ENCODE measurements at regions of chr15 and their contacts with region 1.

Region 1: DNA sequence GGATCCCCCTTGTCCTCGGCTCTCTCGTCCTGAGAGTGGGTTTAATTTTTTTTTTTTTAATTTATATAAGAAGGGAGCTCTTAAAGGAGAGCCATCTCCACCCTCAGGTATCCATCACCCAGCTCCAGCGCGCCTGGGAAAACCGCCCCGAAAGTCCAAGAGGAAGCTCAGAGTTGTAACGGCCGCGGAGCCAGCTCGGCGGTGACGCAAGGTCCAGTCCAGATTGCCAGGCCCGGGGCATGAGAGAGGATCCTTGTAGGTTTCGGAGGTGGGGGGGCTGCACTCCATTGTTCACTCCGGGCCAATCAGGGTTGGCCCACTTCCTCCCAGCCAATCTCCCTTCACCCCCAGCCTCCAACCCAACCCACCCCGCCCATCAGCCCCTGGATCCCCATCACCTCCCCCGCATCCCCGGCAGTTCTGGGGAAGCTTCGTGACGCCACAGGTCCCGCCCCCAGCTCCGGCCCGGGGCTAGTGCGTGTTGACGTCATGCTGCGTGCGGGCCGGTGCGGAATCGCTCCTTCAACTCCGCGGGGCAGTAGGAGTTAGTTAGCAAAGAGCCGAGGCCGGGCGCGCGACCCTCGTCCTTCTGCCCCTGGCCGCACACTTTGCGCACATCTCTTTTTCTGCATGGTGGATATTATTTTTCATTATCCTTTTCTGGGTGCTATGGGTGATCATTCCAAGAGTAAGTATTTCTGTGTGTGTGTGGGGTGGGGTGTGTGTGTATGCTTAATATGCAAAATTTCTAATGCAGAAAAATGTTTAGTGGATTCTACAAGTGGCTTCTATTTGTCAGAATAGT is at the start of gene ISL2:
- DNase-seq: peak; percentile 74
- ATAC-seq: peak; percentile 40
- H3K4me3 ChIP-seq: peak within 1 kb of the TSS; percentile 12 to 60 (median 40)
- H3K4me3 Mint-ChIP-seq: peak within 1 kb of the TSS; percentile 87
- H3K27ac ChIP-seq: no peak within 1 kb of the TSS
- H3K27ac Mint-ChIP-seq: peak within 1 kb of the TSS; percentile 69
- H3K4me1 ChIP-seq: peaks cover 65 to 66% of the 10 kb centered on the region in 2 donors
- H3K4me1 Mint-ChIP-seq: peaks cover 56% of the 10 kb centered on the region
- H3K27me3 ChIP-seq: peaks cover 0 to 88% (median 61%) of the 10 kb centered on the region in 4 experiments
- H3K27me3 Mint-ChIP-seq: peaks cover 58% of the 10 kb centered on the region
- CTCF ChIP-seq: no peak
- total RNA-seq, gene ISL2: 0.22 and 0.59 TPM in 2 replicates

Region 2: DNA sequence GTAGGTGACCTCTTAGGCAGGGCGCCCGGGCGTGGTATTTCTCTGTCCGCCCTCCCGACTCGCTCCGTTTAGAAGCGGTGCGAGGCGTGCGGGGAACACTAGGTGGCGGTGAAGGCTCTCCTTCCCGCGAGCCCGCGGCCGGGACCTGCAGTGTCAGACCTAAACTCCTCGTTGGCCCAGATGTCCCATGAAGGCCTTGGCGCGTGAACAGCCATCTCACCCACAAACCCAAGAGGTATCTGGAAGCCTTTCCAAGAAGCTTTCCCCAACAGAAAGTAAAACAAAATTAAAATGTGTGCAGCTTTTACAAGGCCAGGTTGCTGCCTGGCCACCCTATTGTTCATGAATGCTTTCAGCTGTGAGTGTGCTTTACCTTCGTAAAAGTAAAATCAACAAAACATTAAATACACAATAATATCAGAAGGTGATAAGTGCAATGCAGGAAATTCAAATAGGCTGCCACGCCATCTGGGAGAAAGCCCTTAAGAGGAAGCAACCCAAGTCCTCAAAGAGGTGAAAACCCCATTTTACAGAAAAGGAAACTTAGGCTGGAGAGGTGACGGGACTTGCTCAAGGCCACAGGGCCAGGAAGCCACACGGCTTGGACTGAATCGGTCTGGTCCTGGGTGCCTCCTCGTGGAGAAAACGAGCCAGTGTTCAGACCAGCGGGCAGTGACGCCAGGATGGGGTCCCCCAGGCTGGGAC is 145.5 kb before region 1 on chr15:
- CTCF ChIA-PET with region 1: interaction called, 10 read pairs
- POLR2A ChIA-PET with region 1: no interaction called
- intact Hi-C with region 1: no loop called
- DNase-seq: peak; percentile 72
- ATAC-seq: peak; percentile 94
- H3K4me3 ChIP-seq: peak overlapping the region in 3 of 5 experiments; percentile 13 to 47 (median 30)
- H3K4me3 Mint-ChIP-seq: peak overlapping the region; percentile 74
- H3K27ac ChIP-seq: no peak overlapping the region
- H3K27ac Mint-ChIP-seq: no peak overlapping the region
- H3K4me1 ChIP-seq: peaks cover 14 to 16% of the 10 kb centered on the region in 2 donors
- H3K4me1 Mint-ChIP-seq: peaks cover 16% of the 10 kb centered on the region
- H3K27me3 ChIP-seq: peaks cover 0 to 42% (median 7%) of the 10 kb centered on the region in 4 experiments
- H3K27me3 Mint-ChIP-seq: peaks cover 35% of the 10 kb centered on the region
- CTCF ChIP-seq: peak; percentile 89

Region 3: DNA sequence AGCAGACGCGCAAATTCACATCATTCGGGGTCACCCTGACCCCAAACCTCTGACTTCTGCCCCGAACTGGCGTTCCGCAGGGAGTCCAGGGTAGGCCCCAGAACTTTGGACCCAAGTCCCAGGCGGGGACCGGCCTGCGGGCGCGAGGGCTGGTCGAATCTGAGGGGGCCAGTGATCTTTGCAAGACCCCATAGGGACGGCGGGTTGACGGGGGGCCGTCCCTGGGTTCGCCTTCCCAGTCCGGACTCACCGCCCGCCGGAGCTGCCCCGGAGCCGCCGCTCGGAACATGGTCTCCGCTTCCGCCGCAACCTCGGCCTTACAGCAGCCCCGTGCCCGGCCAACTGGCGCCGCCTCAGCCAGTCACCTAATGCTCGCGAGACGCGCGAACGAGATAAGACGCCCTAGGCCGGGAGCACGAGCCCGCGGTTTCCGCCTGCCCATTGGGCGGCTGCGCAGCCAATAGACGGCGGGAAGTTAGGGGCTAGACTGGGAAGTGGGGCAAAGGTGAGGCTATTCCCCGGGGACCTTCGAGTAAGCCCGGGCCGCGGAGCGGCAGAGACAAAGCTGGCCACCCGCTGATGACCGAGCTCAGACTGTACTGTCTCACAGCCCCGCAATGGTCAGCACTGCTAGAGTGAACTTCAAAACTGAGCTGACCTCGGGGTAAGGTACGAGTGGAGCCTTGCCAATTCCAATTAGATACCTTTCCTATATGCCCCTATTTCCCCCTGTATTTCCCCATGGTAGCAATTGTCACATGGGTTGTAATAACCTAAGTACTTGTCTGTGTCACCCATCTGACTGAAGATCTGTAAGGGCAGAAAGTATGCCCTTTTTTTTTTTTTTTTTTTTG is 25.1 kb before region 1 on chr15 and contains the start of gene ETFA:
- CTCF ChIA-PET with region 1: interaction called, 4 read pairs
- POLR2A ChIA-PET with region 1: interaction called, 13 read pairs
- intact Hi-C with region 1: loop called (anchors 2 kb)
- DNase-seq: peak; percentile 95
- ATAC-seq: peak; percentile 97
- H3K4me3 ChIP-seq: peak within 1 kb of the TSS; percentile 56 to 89 (median 84)
- H3K4me3 Mint-ChIP-seq: peak within 1 kb of the TSS; percentile 89
- H3K27ac ChIP-seq: peak within 1 kb of the TSS; percentile 60 to 83
- H3K27ac Mint-ChIP-seq: peak within 1 kb of the TSS; percentile 88
- H3K4me1 ChIP-seq: peaks cover 11 to 12% of the 10 kb centered on the region in 2 donors
- H3K4me1 Mint-ChIP-seq: peaks cover 34% of the 10 kb centered on the region
- H3K27me3 ChIP-seq: peaks cover 0 to 5% (median 0%) of the 10 kb centered on the region in 4 experiments
- H3K27me3 Mint-ChIP-seq: no peaks in the 10 kb centered on the region
- CTCF ChIP-seq: no peak
- total RNA-seq, gene ETFA: 62.3 and 68.8 TPM in 2 replicates

Region 4: DNA sequence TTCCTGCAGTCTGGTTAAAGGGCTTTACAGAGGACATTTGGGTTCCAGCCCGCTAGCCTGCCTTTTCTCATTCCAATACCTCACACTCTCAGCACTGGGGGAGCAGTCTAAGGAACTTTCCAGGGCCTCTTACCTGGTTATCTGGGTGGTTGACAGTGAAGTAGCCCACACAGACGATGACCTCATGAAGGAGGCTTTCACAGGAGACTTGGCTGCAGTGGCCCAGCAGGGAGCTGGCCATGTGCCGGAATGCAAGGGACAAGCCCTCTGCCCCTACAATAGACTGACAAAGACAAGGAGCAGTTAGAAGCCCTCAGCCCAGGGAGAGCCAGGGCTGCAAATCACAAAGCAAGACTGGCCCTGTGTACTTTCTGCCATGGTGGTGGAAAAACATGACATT is 39.6 kb after region 1 on chr15:
- CTCF ChIA-PET with region 1: no interaction called
- POLR2A ChIA-PET with region 1: no interaction called
- intact Hi-C with region 1: no loop called
- DNase-seq: no peak
- ATAC-seq: no peak
- H3K4me3 ChIP-seq: no peak overlapping the region
- H3K4me3 Mint-ChIP-seq: no peak overlapping the region
- H3K27ac ChIP-seq: no peak overlapping the region
- H3K27ac Mint-ChIP-seq: no peak overlapping the region
- H3K4me1 ChIP-seq: no peaks in the 10 kb centered on the region
- H3K4me1 Mint-ChIP-seq: no peaks in the 10 kb centered on the region
- H3K27me3 ChIP-seq: no peaks in the 10 kb centered on the region
- H3K27me3 Mint-ChIP-seq: no peaks in the 10 kb centered on the region
- CTCF ChIP-seq: no peak

Region 5: DNA sequence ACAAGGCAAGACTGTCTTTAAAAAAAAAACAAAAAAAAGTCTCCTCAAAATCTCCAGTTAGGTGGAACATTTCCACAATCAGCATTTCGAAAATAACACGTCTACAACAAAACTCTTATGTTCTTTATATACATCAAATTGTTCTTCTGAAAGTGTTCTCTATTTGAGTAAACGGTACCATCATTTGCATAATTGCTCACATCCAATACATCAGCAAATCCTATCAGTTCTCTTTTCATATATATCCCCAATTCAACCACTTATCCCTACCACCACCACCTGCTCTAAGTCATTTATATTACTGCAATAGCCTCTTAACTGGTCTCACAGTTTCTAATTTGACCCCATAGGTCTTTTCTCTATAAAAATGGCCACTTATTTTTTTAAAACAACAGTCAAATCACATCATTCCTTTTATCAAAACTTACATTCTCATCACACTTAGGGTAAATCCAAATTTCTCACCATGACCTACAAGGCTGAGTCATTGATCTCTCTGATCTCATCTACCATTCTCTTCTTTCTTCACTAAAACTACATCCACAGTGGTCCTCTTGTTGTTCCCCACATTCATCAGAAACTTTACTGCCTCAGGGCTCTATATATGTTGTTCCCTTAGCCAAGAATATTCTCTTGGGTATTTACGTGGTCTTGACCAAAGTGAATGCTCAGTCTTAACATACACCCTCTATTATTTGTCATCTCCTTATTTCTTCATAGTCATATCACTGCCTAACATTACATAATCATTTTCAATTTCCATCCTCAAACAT is 331.7 kb after region 1 on chr15:
- CTCF ChIA-PET with region 1: no interaction called
- POLR2A ChIA-PET with region 1: no interaction called
- intact Hi-C with region 1: no loop called
- DNase-seq: no peak
- ATAC-seq: no peak
- H3K4me3 ChIP-seq: no peak overlapping the region
- H3K4me3 Mint-ChIP-seq: no peak overlapping the region
- H3K27ac ChIP-seq: no peak overlapping the region
- H3K27ac Mint-ChIP-seq: no peak overlapping the region
- H3K4me1 ChIP-seq: peaks cover 0 to 3% of the 10 kb centered on the region in 2 donors
- H3K4me1 Mint-ChIP-seq: peaks cover 5% of the 10 kb centered on the region
- H3K27me3 ChIP-seq: no peaks in the 10 kb centered on the region
- H3K27me3 Mint-ChIP-seq: no peaks in the 10 kb centered on the region
- CTCF ChIP-seq: no peak